Tibial artery (tissue), 4 donors: ENCODE measurements at regions of chr2 and their contacts with region 1.

Region 1: GRCh38 chr2:60756191-60757041 is at the start of gene PAPOLG:
- DNase-seq: peak; percentile 97 to 98
- H3K4me3 ChIP-seq: peak within 1 kb of the TSS; percentile 87 to 92
- H3K27ac ChIP-seq: peak within 1 kb of the TSS; percentile 89 to 90
- H3K4me1 ChIP-seq: peaks cover 0 to 24% (median 8%) of the 10 kb centered on the region in 4 donors
- H3K27me3 ChIP-seq: no peaks in the 10 kb centered on the region
- CTCF ChIP-seq: no peak

Region 2: GRCh38 chr2:60881047-60881932 is 124.9 kb after region 1 on chr2 and contains the start of gene REL:
- intact Hi-C with region 1: loop called (anchors 5 kb)
- DNase-seq: peak; percentile 84 to 94
- H3K4me3 ChIP-seq: peak within 1 kb of the TSS; percentile 81 to 96
- H3K27ac ChIP-seq: peak within 1 kb of the TSS; percentile 79 to 95
- H3K4me1 ChIP-seq: peaks cover 0 to 20% (median 9%) of the 10 kb centered on the region in 4 donors
- H3K27me3 ChIP-seq: no peaks in the 10 kb centered on the region
- CTCF ChIP-seq: no peak

Region 3: DNA sequence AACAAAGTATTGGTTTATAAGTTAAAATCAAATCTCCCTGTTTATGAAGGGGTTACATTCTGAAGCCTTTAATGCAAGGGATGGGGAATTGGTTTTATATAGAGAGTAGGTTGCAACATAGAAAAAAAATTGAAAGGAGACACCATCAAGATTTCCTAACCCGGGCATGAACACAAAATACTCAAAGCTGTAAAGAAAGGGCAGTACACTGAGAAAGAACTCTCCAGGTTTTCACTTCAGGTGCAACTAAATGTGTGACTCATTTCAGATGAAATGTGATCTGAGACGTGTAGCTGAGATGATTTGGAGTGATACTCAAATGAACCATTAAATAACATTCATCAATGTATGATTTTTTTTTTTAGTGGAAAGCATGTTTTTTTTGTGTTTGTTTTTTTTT is 352.9 kb after region 1 on chr2:
- intact Hi-C with region 1: no loop called
- DNase-seq: no peak
- H3K4me3 ChIP-seq: no peak overlapping the region
- H3K27ac ChIP-seq: no peak overlapping the region
- H3K4me1 ChIP-seq: no peaks in the 10 kb centered on the region
- H3K27me3 ChIP-seq: no peaks in the 10 kb centered on the region
- CTCF ChIP-seq: no peak